Motor neuron (in vitro differentiated cells): ENCODE measurements at regions of chr1 and their contacts with region 1.

Region 1: GRCh38 chr1:196148367-196148970 is 459.8 kb downstream of the KCNT2 start:
- ATAC-seq: peak in 2 of 8 experiments; percentile 23 to 32
- H3K4me3 ChIP-seq: no peak overlapping the region
- H3K27ac ChIP-seq: no peak overlapping the region
- H3K4me1 ChIP-seq: no peaks in the 10 kb centered on the region

Region 2: GRCh38 chr1:196229546-196229945 is 81.1 kb after region 1 on chr1:
- in situ Hi-C with region 1: no loop called
- ATAC-seq: no peak
- H3K4me3 ChIP-seq: no peak overlapping the region
- H3K27ac ChIP-seq: no peak overlapping the region
- H3K4me1 ChIP-seq: no peaks in the 10 kb centered on the region

Region 3: GRCh38 chr1:196309386-196309785 is 160.9 kb after region 1 on chr1:
- in situ Hi-C with region 1: loop called in 3 of 9 experiments (anchors 10 to 25 kb)
- ATAC-seq: peak in 4 of 8 experiments; percentile 15 to 68 (median 39)
- H3K4me3 ChIP-seq: no peak overlapping the region
- H3K27ac ChIP-seq: no peak overlapping the region
- H3K4me1 ChIP-seq: no peaks in the 10 kb centered on the region